CD14-positive monocyte (primary cell): ENCODE measurements at regions of chr1 and their contacts with region 1.

Region 1: DNA sequence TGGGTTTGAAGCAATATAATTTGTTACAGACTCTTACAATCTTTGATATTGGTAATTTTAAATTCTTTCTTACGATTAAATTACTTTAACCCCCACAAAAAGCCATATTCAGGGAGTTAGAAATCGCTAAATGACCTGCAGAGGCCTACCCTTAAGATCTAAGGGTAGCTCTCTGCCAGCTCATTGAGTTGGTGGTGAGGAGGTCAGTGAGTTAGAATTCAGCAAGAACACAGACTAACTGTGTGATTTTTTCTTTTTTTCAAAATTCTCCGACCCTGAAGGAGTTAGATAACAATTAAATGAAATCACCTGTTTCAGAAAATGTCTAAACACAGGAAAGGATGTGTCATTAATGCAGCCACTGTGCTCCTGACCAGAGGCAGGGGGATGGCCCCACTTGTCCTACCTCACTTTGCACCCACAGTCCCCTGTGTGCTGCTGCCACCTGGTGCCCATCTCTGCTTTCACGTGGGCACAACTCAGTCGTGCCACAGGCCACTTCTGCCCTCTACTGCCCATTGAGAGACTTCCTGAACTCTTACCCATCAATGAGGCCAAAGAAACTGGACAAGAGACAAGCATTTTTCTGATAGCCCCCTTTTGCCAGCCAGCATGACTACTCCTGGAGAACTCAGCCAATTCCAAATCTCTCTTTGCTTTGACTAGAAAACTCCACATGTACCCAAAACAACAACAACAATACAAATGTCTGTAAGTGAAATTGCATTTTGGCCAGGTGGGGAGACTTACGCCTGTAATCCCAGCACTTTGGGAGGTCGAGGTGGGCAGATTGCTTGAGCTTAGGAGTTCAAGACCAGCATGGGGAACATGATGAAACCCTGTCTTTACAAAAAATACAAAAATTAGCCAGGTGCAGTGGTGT is 8.4 kb downstream of the CFAP45 start:
- DNase-seq: peak; percentile 89 to 95 (median 93)
- H3K4me3 ChIP-seq: no peak overlapping the region
- H3K4me3 Mint-ChIP-seq: no peak overlapping the region
- H3K27ac ChIP-seq: no peak overlapping the region
- H3K27ac Mint-ChIP-seq: peak overlapping the region in 5 of 7 donors; percentile 54 to 90 (median 84)
- H3K4me1 ChIP-seq: peaks cover 58 to 62% of the 10 kb centered on the region in 2 donors
- H3K4me1 Mint-ChIP-seq: peaks cover 60% of the 10 kb centered on the region
- H3K27me3 ChIP-seq: no peaks in the 10 kb centered on the region
- H3K27me3 Mint-ChIP-seq: peaks cover 0 to 4% (median 1%) of the 10 kb centered on the region in 3 donors
- CTCF ChIP-seq: peak; percentile 99

Region 2: GRCh38 chr1:159161001-159161718 is 730.4 kb before region 1 on chr1:
- intact Hi-C with region 1: loop called in 1 of 2 experiments (anchors 5 kb)
- DNase-seq: peak; percentile 55 to 72 (median 69)
- H3K4me3 ChIP-seq: no peak overlapping the region
- H3K4me3 Mint-ChIP-seq: no peak overlapping the region
- H3K27ac ChIP-seq: no peak overlapping the region
- H3K27ac Mint-ChIP-seq: no peak overlapping the region
- H3K4me1 ChIP-seq: peaks cover 0 to 3% of the 10 kb centered on the region in 2 donors
- H3K4me1 Mint-ChIP-seq: peaks cover 10% of the 10 kb centered on the region
- H3K27me3 ChIP-seq: peaks cover 12 to 25% of the 10 kb centered on the region in 2 donors
- H3K27me3 Mint-ChIP-seq: peaks cover 6 to 24% (median 12%) of the 10 kb centered on the region in 3 donors
- CTCF ChIP-seq: peak; percentile 98

Region 3: GRCh38 chr1:159780583-159781582 is 110.6 kb before region 1 on chr1 and contains the start of gene DUSP23:
- intact Hi-C with region 1: loop called (anchors 5 kb)
- DNase-seq: peak; percentile 97
- H3K4me3 ChIP-seq: peak within 1 kb of the TSS; percentile 64 to 91 (median 72)
- H3K4me3 Mint-ChIP-seq: peak within 1 kb of the TSS; percentile 81 to 90
- H3K27ac ChIP-seq: peak within 1 kb of the TSS in 1 of 2 donors; percentile 68
- H3K27ac Mint-ChIP-seq: peak within 1 kb of the TSS in 6 of 7 donors; percentile 34 to 86 (median 68)
- H3K4me1 ChIP-seq: peaks cover 13 to 17% of the 10 kb centered on the region in 2 donors
- H3K4me1 Mint-ChIP-seq: peaks cover 14% of the 10 kb centered on the region
- H3K27me3 ChIP-seq: no peaks in the 10 kb centered on the region
- H3K27me3 Mint-ChIP-seq: peaks cover 0 to 2% (median 1%) of the 10 kb centered on the region in 3 donors
- CTCF ChIP-seq: peak; percentile 92
- polyA plus RNA-seq, gene DUSP23: 37.3 to 136 (median 97.8) TPM

Region 4: GRCh38 chr1:159798893-159799292 is 92.6 kb before region 1 on chr1:
- intact Hi-C with region 1: loop called (anchors 1 to 2 kb)
- DNase-seq: peak; percentile 55 to 74 (median 73)
- H3K4me3 ChIP-seq: no peak overlapping the region
- H3K4me3 Mint-ChIP-seq: no peak overlapping the region
- H3K27ac ChIP-seq: no peak overlapping the region
- H3K27ac Mint-ChIP-seq: no peak overlapping the region
- H3K4me1 ChIP-seq: peaks cover 26 to 34% of the 10 kb centered on the region in 2 donors
- H3K4me1 Mint-ChIP-seq: peaks cover 38% of the 10 kb centered on the region
- H3K27me3 ChIP-seq: peaks cover 0 to 6% of the 10 kb centered on the region in 2 donors
- H3K27me3 Mint-ChIP-seq: peaks cover 7 to 10% (median 10%) of the 10 kb centered on the region in 3 donors
- CTCF ChIP-seq: peak; percentile 84

Region 5: GRCh38 chr1:159829273-159829634 is 62.3 kb before region 1 on chr1:
- intact Hi-C with region 1: loop called in 1 of 2 experiments (anchors 2 kb)
- DNase-seq: peak; percentile 74 to 86 (median 85)
- H3K4me3 ChIP-seq: peak overlapping the region in 1 of 3 experiments; percentile 59
- H3K4me3 Mint-ChIP-seq: peak overlapping the region; percentile 54 to 84
- H3K27ac ChIP-seq: peak overlapping the region; percentile 57 to 74
- H3K27ac Mint-ChIP-seq: peak overlapping the region; percentile 52 to 96 (median 82)
- H3K4me1 ChIP-seq: peaks cover 62% of the 10 kb centered on the region in 2 donors
- H3K4me1 Mint-ChIP-seq: peaks cover 75% of the 10 kb centered on the region
- H3K27me3 ChIP-seq: no peaks in the 10 kb centered on the region
- H3K27me3 Mint-ChIP-seq: peaks cover 0 to 5% (median 4%) of the 10 kb centered on the region in 3 donors
- CTCF ChIP-seq: peak; percentile 71

Region 6: GRCh38 chr1:159924981-159925712 is 33.6 kb after region 1 on chr1 and contains the start of gene TAGLN2:
- intact Hi-C with region 1: loop called (anchors 5 kb)
- DNase-seq: peak; percentile 82 to 92 (median 88)
- H3K4me3 ChIP-seq: peak within 1 kb of the TSS; percentile 76 to 96 (median 94)
- H3K4me3 Mint-ChIP-seq: peak within 1 kb of the TSS; percentile 96 to 97
- H3K27ac ChIP-seq: peak within 1 kb of the TSS; percentile 95 to 99
- H3K27ac Mint-ChIP-seq: peak within 1 kb of the TSS; percentile 97 to 100 (median 100)
- H3K4me1 ChIP-seq: peaks cover 39 to 43% of the 10 kb centered on the region in 2 donors
- H3K4me1 Mint-ChIP-seq: peaks cover 42% of the 10 kb centered on the region
- H3K27me3 ChIP-seq: no peaks in the 10 kb centered on the region
- H3K27me3 Mint-ChIP-seq: peaks cover 5 to 18% (median 11%) of the 10 kb centered on the region in 3 donors
- CTCF ChIP-seq: no peak
- polyA plus RNA-seq, gene TAGLN2: 658 to 1,259 (median 918) TPM

Region 7: DNA sequence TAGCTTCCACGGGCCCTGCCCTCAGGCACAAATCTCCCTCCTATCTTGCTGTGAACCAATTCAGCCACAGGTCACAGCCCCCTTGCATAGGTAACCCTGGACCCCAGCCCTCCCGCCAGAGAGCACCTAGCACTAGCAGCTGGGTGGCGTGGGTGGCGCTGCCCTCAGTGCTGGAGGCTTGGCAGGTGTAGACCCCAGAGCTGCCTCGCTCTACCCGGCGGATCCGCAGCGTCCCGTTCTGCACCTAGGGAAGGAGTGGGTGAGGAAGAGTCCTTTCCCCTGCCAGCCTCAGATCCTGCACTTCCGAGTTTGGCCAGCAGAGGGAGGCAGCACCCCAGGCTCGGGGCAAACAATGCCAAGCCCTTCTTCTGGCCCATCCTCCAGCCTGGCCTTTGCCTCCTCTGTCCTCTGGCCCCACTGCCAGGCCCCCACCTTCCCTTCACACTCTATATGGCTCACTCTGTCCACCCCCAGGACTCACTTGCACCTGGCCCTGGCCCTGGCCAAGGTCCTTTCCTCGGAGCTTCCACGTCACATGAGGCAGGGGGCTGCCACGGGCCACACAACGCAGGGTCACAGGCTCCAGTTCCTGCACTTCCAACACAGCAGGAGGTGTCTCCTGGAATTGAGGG is 44.9 kb after region 1 on chr1:
- intact Hi-C with region 1: loop called in 1 of 2 experiments (anchors 5 kb)
- DNase-seq: peak; percentile 65 to 72 (median 69)
- H3K4me3 ChIP-seq: peak overlapping the region in 1 of 3 experiments; percentile 63
- H3K4me3 Mint-ChIP-seq: no peak overlapping the region
- H3K27ac ChIP-seq: peak overlapping the region in 1 of 2 donors; percentile 43
- H3K27ac Mint-ChIP-seq: peak overlapping the region in 6 of 7 donors; percentile 17 to 75 (median 48)
- H3K4me1 ChIP-seq: peaks cover 40 to 50% of the 10 kb centered on the region in 2 donors
- H3K4me1 Mint-ChIP-seq: peaks cover 57% of the 10 kb centered on the region
- H3K27me3 ChIP-seq: no peaks in the 10 kb centered on the region
- H3K27me3 Mint-ChIP-seq: peaks cover 0 to 2% (median 2%) of the 10 kb centered on the region in 3 donors
- CTCF ChIP-seq: peak; percentile 99

Region 8: DNA sequence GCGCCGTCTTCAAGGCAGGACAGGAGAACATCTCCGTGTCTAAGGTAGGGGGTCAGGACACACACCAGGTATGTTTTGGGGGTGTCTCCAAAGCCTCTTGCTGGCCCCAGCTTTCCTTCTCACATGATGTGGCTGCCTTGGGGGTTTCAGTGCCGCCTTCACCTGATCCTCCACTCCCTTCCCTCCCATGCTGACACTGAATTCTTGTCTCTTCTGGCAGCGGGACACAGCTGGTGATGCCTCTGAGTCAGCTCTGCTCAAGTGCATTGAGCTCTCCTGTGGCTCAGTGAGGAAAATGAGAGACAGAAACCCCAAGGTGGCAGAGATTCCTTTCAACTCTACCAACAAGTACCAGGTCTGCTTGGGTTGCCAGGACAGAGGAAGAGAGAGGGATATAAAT is 237.5 kb after region 1 on chr1:
- intact Hi-C with region 1: no loop called
- DNase-seq: no peak
- H3K4me3 ChIP-seq: no peak overlapping the region
- H3K4me3 Mint-ChIP-seq: no peak overlapping the region
- H3K27ac ChIP-seq: no peak overlapping the region
- H3K27ac Mint-ChIP-seq: peak overlapping the region in 1 of 7 donors; percentile 53
- H3K4me1 ChIP-seq: no peaks in the 10 kb centered on the region
- H3K4me1 Mint-ChIP-seq: no peaks in the 10 kb centered on the region
- H3K27me3 ChIP-seq: no peaks in the 10 kb centered on the region
- H3K27me3 Mint-ChIP-seq: peaks cover 5 to 9% (median 6%) of the 10 kb centered on the region in 3 donors
- CTCF ChIP-seq: no peak